ENCODE measurements at regions of chr14 and their contacts with region 1.

Region 1: GRCh38 chr14:23406244-23406643 is 1.8 kb downstream of the MYH6 start:
- DNase-seq: peak; percentile 8
- H3K4me3 ChIP-seq: no peak overlapping the region
- H3K27ac ChIP-seq: no peak overlapping the region
- H3K4me1 ChIP-seq: no peaks in the 10 kb centered on the region
- H3K27me3 ChIP-seq: no peaks in the 10 kb centered on the region
- CTCF ChIP-seq: no peak

Region 2: DNA sequence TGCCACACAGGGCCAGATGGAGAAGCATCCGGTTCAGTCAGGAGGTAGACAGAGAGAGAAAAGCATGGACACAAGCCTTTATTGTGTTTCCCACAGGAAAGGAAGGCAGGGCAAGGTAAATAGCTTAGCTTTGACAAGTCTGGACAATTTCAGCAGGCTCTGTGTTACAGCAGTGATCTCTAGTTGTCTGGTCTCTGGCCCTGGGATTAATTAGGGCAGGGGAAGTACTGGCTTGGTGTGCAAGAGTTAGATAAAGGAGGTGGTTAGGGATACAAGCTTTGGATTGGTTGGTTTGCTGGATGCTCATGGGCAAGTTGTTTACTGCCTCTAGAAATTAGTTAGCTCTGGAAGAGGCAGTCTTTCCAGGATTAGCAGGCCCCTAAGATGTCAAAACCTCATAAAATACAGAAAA is 48.2 kb after region 1 on chr14:
- CTCF ChIA-PET with region 1: no interaction called
- dilution Hi-C with region 1: loop called (anchors 5 kb)
- in situ Hi-C with region 1: no loop called
- intact Hi-C with region 1: no loop called
- DNase-seq: peak; percentile 93
- H3K4me3 ChIP-seq: no peak overlapping the region
- H3K27ac ChIP-seq: peak overlapping the region; percentile 64
- H3K4me1 ChIP-seq: peaks cover 14% of the 10 kb centered on the region
- H3K27me3 ChIP-seq: no peaks in the 10 kb centered on the region
- CTCF ChIP-seq: no peak